Aorta (tissue), 5 donors: ENCODE measurements at regions of chr2 and their contacts with region 1.

Region 1: DNA sequence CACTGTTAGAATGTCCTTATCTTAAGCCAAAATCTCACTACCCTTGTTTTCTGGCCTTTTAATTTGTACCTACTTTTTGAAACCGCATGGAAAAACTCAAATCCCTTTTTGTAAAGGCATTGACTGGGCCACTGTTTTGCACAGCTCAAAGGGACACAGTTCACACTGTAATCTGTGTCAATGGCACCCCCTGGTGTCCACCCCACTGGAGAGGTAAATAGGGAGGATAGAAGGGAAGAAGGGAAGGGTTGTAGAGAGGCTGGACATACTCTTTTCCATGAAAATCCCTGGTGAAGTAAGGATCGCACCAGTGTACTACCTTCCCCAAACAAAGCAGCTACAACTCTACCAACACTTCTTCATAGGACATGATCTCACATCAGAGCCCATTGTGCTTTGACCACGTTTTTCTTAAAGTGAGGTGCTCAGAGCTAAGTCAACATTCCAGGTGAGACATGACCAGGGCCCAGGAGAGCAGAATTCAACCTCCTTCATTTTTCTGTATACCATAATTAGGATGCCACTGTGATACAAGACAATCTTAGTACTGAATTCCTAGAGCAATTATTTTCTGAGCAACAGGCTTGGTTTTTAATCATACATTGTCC is 92.4 kb upstream of the RMDN2 start:
- DNase-seq: peak; percentile 92 to 96
- ATAC-seq: peak; percentile 93
- H3K4me3 ChIP-seq: no peak overlapping the region
- H3K27ac ChIP-seq: no peak overlapping the region
- H3K4me1 ChIP-seq: peaks cover 1 to 5% of the 10 kb centered on the region in 2 donors
- H3K27me3 ChIP-seq: no peaks in the 10 kb centered on the region

Region 2: GRCh38 chr2:37389989-37390765 is 442.5 kb before region 1 on chr2:
- intact Hi-C with region 1: loop called in 1 of 2 experiments (anchors 5 kb)
- DNase-seq: no peak
- ATAC-seq: peak; percentile 34
- H3K4me3 ChIP-seq: no peak overlapping the region
- H3K27ac ChIP-seq: no peak overlapping the region
- H3K4me1 ChIP-seq: no peaks in the 10 kb centered on the region
- H3K27me3 ChIP-seq: no peaks in the 10 kb centered on the region

Region 3: GRCh38 chr2:37665604-37666362 is 166.9 kb before region 1 on chr2:
- intact Hi-C with region 1: loop called (anchors 5 kb)
- DNase-seq: no peak
- ATAC-seq: no peak
- H3K4me3 ChIP-seq: no peak overlapping the region
- H3K27ac ChIP-seq: peak overlapping the region; percentile 24 to 46
- H3K4me1 ChIP-seq: peaks cover 3 to 14% of the 10 kb centered on the region in 2 donors
- H3K27me3 ChIP-seq: no peaks in the 10 kb centered on the region

Region 4: DNA sequence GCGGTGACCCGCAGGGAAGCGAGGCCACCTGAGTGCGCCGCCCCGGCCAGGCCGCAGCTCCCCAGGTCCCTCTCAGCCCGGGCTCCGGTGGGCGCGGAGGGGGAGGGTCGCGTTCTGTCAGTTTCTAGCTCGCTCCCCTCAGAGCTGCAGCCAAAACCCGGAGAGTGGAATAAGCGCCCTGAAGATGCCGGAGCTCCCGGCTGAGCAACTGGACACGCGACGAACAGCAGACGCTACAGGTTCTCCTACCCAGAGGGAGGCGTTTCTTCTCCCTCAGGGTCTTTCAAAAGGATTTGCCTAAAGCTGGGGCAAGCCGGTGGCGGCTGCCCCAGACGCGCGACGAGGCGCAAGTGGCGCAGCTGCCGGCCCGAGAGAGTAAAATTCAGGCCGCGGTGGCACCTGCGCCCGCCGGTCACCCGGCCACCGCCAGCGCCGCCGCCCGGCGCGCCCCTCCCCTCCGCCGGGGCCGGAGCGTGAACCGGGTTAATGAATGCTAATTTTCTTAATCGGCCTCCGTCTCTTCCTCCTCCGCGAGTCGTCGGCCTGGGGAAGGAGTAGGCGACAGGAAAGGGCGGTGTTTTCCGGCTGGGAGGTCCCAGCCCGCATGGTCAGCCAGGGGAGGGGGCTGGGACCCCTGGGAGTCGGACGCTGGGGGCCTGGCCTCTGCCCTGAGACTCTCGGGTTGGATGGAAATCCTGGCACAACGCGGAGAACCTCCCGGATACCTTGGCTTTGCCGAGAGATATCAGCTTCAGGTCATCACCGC is 160.4 kb before region 1 on chr2:
- intact Hi-C with region 1: loop called (anchors 5 kb)
- DNase-seq: peak; percentile 84 to 89
- ATAC-seq: peak; percentile 75
- H3K4me3 ChIP-seq: peak overlapping the region; percentile 82 to 97
- H3K27ac ChIP-seq: peak overlapping the region; percentile 61 to 88
- H3K4me1 ChIP-seq: peaks cover 0 to 4% of the 10 kb centered on the region in 2 donors
- H3K27me3 ChIP-seq: no peaks in the 10 kb centered on the region

Region 5: DNA sequence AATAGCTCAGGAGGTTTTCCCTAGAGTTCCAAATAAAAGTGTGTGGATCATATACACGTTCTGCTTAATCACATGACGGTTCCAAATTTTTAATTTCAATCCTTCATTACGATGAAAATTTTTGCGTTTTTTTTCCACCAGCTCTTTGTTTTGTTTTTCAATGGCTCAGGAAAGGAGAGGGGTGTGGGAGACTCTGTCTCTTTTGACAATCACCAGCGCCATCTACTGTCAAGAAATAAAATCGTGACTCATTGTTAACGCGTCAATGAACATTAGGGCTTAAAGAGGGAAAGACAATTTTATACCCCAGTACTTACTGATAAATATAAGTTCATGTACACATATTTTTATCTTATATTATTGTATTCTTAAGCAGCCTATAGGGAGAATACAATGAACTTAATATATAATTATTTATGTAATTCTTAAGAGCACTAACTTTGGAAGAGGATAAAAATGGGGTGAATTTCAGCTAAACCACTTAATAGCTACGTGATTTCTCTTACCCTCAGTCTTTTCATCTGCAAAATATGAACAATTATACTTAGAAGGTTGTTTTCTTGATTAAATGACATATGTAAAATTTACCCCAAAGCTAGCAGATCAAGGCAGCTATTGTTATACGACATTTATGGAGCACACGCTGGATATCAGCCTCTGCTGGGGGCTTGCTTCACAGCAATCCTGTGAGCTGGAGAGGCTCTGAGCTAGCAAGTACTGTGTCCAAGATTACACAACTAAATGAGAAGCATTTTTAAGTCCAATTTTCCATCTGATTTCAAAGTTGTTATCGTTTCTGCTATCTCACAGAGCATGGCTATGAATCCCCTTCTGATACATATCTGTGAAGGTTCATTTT is 45.0 kb after region 1 on chr2:
- intact Hi-C with region 1: loop called (anchors 2 to 5 kb)
- DNase-seq: no peak
- ATAC-seq: peak; percentile 70
- H3K4me3 ChIP-seq: no peak overlapping the region
- H3K27ac ChIP-seq: no peak overlapping the region
- H3K4me1 ChIP-seq: no peaks in the 10 kb centered on the region
- H3K27me3 ChIP-seq: no peaks in the 10 kb centered on the region